ENCODE measurements at regions of chr12 and their contacts with region 1.

Region 1: GRCh38 chr12:122336015-122336946 is 70.0 kb upstream of the VPS33A start:
- DNase-seq: peak; percentile 23
- ATAC-seq: peak; percentile 60
- H3K4me3 ChIP-seq: no peak overlapping the region
- H3K27ac ChIP-seq: no peak overlapping the region
- H3K4me1 ChIP-seq: peaks cover 10% of the 10 kb centered on the region
- H3K27me3 ChIP-seq: no peaks in the 10 kb centered on the region
- CTCF ChIP-seq: peak; percentile 62
- EP300 ChIP-seq: no peak
- POLR2A ChIP-seq: no peak
- RAD21 ChIP-seq: peak; percentile 50; the same call in 1 of the 2 replicates

Region 2: DNA sequence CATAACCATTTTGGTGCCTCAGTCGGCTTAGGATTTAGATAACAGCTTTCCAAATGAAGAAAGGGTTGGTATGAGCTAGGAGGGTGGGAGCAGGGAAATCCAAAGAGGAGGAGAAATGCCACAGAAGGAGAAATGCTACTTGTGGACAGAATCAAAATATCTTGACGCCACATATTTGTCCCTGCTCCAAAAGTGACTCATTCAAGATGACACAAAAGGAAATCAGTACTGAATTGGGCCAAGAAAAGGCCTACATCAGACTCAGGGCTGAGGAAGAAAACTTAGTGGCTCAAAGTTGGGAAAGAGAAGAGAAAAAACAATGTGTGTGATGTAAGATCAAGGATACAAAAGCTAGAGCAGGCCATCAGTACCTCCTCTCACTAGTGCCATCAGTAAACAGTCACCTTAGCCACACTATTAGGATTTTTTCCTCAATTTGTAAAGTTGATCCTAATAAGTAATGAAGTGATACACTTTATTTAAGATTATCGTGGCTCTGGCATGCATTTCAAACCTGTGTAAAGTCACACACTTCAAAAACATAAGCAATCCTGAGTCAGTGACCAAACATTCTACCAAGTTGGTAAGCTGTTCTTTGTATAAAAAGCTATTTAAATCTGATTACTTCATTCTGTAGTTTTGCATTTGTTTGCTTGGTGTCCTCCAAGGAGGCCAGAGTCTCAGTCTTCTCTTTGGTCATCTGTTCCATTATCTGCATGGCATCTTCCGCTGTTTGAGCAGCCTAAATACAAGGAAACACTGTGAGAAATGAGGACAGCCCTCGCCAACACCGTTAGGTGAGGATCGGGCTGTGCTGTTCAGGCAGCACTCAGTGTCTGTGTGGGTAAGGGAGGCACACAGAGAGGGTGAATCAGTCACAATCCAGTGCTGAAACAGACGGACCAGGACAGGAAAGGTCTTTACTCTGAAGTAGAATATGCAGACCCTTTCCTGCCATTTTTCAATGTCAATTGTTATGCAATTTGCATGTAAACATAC is 17.4 kb before region 1 on chr12:
- CTCF ChIA-PET with region 1: no interaction called
- POLR2A ChIA-PET with region 1: no interaction called
- in situ Hi-C with region 1: no loop called
- intact Hi-C with region 1: no loop called
- DNase-seq: no peak
- ATAC-seq: no peak
- H3K4me3 ChIP-seq: no peak overlapping the region
- H3K27ac ChIP-seq: no peak overlapping the region
- H3K4me1 ChIP-seq: no peaks in the 10 kb centered on the region
- H3K27me3 ChIP-seq: no peaks in the 10 kb centered on the region
- CTCF ChIP-seq: no peak
- EP300 ChIP-seq: no peak
- POLR2A ChIP-seq: no peak
- RAD21 ChIP-seq: no peak

Region 3: DNA sequence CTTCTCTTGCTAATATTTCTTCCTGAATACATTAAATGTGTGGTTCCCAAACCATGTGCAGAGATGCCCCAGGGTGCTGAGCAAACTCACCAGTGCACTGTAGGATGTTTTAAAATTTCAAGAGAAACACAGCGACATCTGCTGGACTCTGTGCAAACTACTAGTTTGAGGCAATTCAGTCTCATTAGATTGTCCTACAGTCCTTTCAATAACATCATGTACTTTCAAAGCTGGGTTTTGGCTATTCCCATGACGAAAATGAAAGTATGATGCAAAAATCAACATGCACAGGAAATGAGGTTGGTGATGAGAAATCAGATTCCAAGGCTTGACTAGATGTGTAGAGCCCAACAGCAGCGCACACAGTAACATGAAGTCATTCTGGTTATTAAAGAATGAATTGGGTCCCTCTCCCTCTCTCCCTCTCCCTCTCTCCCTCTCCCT is 19.9 kb after region 1 on chr12:
- CTCF ChIA-PET with region 1: interaction called, 15 read pairs
- POLR2A ChIA-PET with region 1: no interaction called
- in situ Hi-C with region 1: no loop called
- intact Hi-C with region 1: no loop called
- DNase-seq: peak; percentile 54
- ATAC-seq: peak; percentile 88
- H3K4me3 ChIP-seq: no peak overlapping the region
- H3K27ac ChIP-seq: no peak overlapping the region
- H3K4me1 ChIP-seq: peaks cover 1% of the 10 kb centered on the region
- H3K27me3 ChIP-seq: no peaks in the 10 kb centered on the region
- CTCF ChIP-seq: peak; percentile 75
- EP300 ChIP-seq: no peak
- POLR2A ChIP-seq: no peak
- RAD21 ChIP-seq: 0 out of 2 replicates have a peak, but pooled peaks have one; percentile 22

Region 4: GRCh38 chr12:122471324-122472226 is 135.3 kb after region 1 on chr12:
- CTCF ChIA-PET with region 1: interaction called, 13 read pairs
- POLR2A ChIA-PET with region 1: no interaction called
- in situ Hi-C with region 1: no loop called
- intact Hi-C with region 1: loop called (anchors 5 kb)
- DNase-seq: peak; percentile 77
- ATAC-seq: peak; percentile 52
- H3K4me3 ChIP-seq: no peak overlapping the region
- H3K27ac ChIP-seq: no peak overlapping the region
- H3K4me1 ChIP-seq: peaks cover 7% of the 10 kb centered on the region
- H3K27me3 ChIP-seq: no peaks in the 10 kb centered on the region
- CTCF ChIP-seq: peak; percentile 71
- EP300 ChIP-seq: no peak
- POLR2A ChIP-seq: no peak
- RAD21 ChIP-seq: peak; percentile 48; the same call in 1 of the 2 replicates